ENCODE measurements at regions of chr2 and their contacts with region 1.

Region 1: DNA sequence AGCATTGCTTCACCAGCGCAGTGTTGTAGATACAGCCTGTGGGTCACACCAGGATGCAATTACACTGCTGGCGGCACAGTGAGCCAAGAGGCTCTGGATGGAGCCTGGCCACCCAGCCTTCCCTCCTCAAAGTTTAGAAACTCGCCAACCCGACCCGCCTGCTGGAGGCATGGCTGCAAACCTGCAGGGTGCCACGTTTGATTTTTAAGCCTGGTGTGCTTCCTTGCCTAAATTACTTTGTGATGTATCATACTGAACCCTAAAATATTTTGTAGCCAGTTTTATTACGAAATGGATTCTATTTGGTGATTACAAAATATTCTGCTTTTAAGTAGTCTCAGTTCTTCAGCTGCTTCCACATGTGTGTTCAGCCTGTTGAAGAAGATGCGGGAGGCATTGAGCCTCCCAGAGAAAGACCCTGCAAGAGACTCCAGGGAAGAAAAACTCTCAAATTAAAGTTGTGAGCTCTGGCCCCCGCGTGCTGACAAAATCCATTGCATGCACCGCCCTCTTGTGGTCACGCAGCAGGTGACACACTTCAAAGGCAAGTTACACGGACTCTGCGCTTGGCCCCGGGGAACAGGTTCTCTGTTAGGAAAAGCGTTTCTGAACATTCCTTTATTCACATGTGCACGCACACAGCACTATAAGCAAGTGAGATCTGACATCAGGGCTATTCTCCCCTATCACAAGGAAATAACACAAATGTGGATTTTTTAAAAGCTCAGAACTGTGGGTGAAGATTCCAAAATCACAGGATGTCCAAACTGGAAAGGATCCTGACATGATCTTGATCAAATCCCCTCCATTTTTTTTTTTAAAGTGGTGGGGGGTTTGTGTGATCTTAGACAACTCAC is 63.0 kb upstream of the TWIST2 start:
- DNase-seq: peak; percentile 78
- ATAC-seq: peak; percentile 91

Region 2: DNA sequence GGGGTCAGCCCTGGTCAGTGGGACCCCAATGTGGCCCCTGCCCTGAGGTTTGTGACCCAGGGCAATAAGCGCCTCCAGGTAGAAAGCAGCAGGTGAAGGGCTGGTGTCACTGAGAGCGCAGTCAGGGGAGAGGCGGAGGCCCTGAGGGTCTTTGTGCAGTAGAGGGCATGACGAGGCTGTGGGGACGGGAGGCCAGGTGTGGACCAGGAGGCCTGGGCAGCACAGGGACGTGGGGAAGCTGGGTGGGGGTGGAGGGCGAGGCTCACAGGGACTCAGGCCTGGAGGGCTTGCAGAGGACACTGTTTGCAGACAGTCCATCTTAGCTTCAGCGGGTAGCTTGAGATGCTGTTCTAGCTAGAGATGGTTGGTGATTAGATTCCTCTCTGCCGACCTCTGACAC is 432.5 kb before region 1 on chr2:
- intact Hi-C with region 1: loop called (anchors 10 kb)
- DNase-seq: no peak
- ATAC-seq: no peak

Region 3: GRCh38 chr2:238513346-238513745 is 271.6 kb before region 1 on chr2:
- intact Hi-C with region 1: loop called (anchors 10 kb)
- DNase-seq: peak; percentile 50
- ATAC-seq: peak; percentile 61

Measured in left ventricle myocardium superior (tissue), 1 donor.